Activated naive CD4-positive, alpha-beta T cell treated with anti-CD3 and anti-CD28 coated beads for 36 hours (primary cell): ENCODE measurements at regions of chr17 and their contacts with region 1.

Region 1: DNA sequence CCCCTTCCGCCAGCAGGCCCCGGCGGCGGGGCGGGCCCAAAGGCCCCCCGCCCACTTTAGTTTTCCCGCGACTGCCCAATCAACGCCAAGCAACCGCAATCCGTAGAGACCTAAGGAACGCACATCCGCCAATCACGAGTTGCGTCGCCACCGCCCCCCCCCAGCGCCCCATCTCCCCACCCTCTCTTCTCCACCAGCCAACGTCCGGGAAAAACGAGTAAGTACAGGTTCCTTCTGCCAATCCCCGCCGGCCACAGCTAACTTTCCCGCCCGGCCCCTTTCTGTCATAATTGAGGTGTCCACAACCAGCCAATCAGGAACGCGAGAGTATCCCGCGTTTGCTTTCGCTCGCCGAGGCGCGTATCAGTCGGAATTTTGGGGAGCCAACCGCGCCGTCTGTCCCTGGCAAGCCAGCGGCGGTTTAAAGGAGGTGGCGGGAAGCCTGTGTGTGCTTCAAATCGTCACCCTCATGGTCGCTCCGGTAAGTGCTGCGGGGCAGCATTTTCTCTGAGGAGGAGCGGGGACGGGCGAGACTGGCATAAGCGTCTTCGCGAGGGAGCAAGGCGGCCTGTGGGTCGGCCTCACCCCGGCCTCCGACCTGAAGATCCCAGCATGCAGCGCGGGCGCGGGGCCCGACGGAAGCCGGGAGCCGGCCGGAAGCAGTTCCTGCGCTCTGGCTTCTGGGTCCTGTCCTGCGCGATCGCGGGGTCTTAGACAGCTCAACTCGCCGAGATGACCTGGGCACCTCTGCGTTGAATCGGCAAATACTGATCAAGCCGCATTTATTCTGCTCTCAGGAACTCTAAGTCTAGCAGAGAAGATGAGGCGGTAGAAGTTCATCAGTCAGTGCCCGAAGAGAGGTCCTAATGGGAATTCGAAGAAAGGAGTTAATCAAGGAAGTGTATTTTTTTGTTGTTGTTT is at the start of gene MIS12:
- DNase-seq: peak; percentile 99
- H3K4me3 Mint-ChIP-seq: peak within 1 kb of the TSS; percentile 97
- H3K27ac Mint-ChIP-seq: peak within 1 kb of the TSS; percentile 97
- H3K4me1 Mint-ChIP-seq: peaks cover 60% of the 10 kb centered on the region
- H3K27me3 Mint-ChIP-seq: no peaks in the 10 kb centered on the region
- total RNA-seq, gene MIS12: 37.2 to 37.6 TPM

Region 2: GRCh38 chr17:4366327-4367063 is 1120.0 kb before region 1 on chr17 and contains the start of gene UBE2G1:
- CTCF ChIA-PET with region 1: no interaction called
- intact Hi-C with region 1: loop called (anchors 5 kb)
- DNase-seq: peak; percentile 99
- H3K4me3 Mint-ChIP-seq: peak within 1 kb of the TSS; percentile 71
- H3K27ac Mint-ChIP-seq: peak within 1 kb of the TSS; percentile 81
- H3K4me1 Mint-ChIP-seq: peaks cover 31% of the 10 kb centered on the region
- H3K27me3 Mint-ChIP-seq: no peaks in the 10 kb centered on the region
- total RNA-seq, gene UBE2G1: 33.3 to 36.1 TPM

Region 3: GRCh38 chr17:5281814-5282653 is 204.4 kb before region 1 on chr17 and contains the start of gene RABEP1:
- CTCF ChIA-PET with region 1: no interaction called
- intact Hi-C with region 1: loop called (anchors 5 kb)
- DNase-seq: peak; percentile 94
- H3K4me3 Mint-ChIP-seq: peak within 1 kb of the TSS; percentile 91
- H3K27ac Mint-ChIP-seq: peak within 1 kb of the TSS; percentile 88
- H3K4me1 Mint-ChIP-seq: peaks cover 38% of the 10 kb centered on the region
- H3K27me3 Mint-ChIP-seq: no peaks in the 10 kb centered on the region
- total RNA-seq, gene RABEP1: 57.9 to 59.3 TPM

Region 4: DNA sequence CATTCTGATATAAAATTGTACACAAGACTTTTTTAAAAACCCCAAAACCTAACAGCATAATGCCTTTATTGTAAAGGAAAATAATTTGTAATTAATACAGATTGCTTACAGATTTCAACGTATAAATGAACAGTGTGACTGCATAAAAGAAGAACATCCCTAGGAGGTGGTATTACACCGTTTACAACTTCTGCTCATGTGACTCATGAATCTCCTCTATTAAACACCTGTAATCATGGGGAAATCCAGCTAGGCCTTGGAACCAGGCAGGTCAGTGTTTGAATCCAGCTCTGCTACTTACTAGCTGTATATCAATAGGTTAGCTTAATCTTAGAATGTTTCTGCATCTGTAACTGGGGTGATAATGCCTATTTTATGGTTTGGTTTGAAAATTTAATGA is 189.2 kb before region 1 on chr17:
- CTCF ChIA-PET with region 1: no interaction called
- intact Hi-C with region 1: no loop called
- DNase-seq: no peak
- H3K4me3 Mint-ChIP-seq: no peak overlapping the region
- H3K27ac Mint-ChIP-seq: no peak overlapping the region
- H3K4me1 Mint-ChIP-seq: peaks cover 38% of the 10 kb centered on the region
- H3K27me3 Mint-ChIP-seq: no peaks in the 10 kb centered on the region

Region 5: GRCh38 chr17:5438716-5439445 is 47.6 kb before region 1 on chr17 and contains the start of gene C1QBP:
- CTCF ChIA-PET with region 1: interaction called, 3 read pairs
- intact Hi-C with region 1: loop called (anchors 1 kb)
- DNase-seq: peak; percentile 94
- H3K4me3 Mint-ChIP-seq: peak within 1 kb of the TSS; percentile 81
- H3K27ac Mint-ChIP-seq: peak within 1 kb of the TSS; percentile 88
- H3K4me1 Mint-ChIP-seq: peaks cover 41% of the 10 kb centered on the region
- H3K27me3 Mint-ChIP-seq: no peaks in the 10 kb centered on the region
- total RNA-seq, gene C1QBP: 435 to 460 TPM

Region 6: DNA sequence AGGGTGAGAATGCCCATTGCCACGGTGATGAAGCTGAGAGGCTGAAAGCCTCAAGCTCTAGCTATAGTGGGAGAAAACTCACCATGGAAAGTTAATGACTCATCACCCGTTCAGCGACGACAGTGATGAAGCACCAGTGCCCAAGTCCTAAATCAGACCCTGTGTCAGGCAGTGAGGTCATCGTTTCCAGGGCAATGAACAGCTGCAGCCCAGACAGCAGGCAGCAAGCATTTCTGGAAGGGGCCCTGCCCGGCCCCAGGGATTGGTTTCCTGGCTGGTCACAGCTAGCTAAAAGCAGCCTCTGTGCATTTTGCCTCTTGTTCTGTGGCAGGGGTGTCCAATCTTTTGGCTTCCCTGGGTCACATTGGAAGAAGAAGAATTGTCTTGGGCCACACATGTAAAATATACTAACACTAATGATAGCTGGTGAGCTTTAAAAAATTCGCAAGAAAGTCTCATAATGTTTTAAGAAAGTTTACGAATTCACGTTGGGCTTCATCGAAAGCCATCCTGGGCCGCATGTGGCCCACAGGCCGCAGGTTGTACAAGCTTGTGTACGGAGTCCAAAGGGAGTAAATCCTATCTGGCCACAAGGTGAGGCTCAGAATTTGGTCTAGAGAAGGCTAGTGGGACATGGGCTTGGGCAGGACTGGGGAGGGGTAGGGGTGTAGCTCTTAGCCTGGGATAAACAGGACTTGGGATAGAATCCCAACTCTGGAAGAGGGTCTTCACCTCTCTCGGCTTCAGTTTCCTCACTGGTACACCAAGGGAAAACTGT is 40.5 kb after region 1 on chr17:
- CTCF ChIA-PET with region 1: interaction called, 3 read pairs
- intact Hi-C with region 1: loop called (anchors 1 kb)
- DNase-seq: peak; percentile 87
- H3K4me3 Mint-ChIP-seq: no peak overlapping the region
- H3K27ac Mint-ChIP-seq: peak overlapping the region; percentile 80
- H3K4me1 Mint-ChIP-seq: peaks cover 17% of the 10 kb centered on the region
- H3K27me3 Mint-ChIP-seq: no peaks in the 10 kb centered on the region

Region 7: GRCh38 chr17:5758651-5759050 is 272.2 kb after region 1 on chr17:
- CTCF ChIA-PET with region 1: no interaction called
- intact Hi-C with region 1: no loop called
- DNase-seq: peak; percentile 7
- H3K4me3 Mint-ChIP-seq: no peak overlapping the region
- H3K27ac Mint-ChIP-seq: no peak overlapping the region
- H3K4me1 Mint-ChIP-seq: no peaks in the 10 kb centered on the region
- H3K27me3 Mint-ChIP-seq: peaks cover 28% of the 10 kb centered on the region